PC-9 (cell line): ENCODE measurements at regions of chr9 and their contacts with region 1.

Region 1: GRCh38 chr9:94672811-94673487 is 33.6 kb upstream of the FBP1 start:
- DNase-seq: peak in 1 of 2 experiments; percentile 85
- H3K4me3 ChIP-seq: no peak overlapping the region; the same call in 1 of the 2 replicates
- H3K27ac ChIP-seq: peak overlapping the region; percentile 61
- H3K4me1 ChIP-seq: peaks cover 19% of the 10 kb centered on the region
- H3K27me3 ChIP-seq: no peaks in the 10 kb centered on the region
- CTCF ChIP-seq: no peak

Region 2: GRCh38 chr9:94649100-94649819 is 23.7 kb before region 1 on chr9:
- CTCF ChIA-PET with region 1: interaction called, 10 read pairs
- POLR2A ChIA-PET with region 1: interaction called, 20 read pairs
- intact Hi-C with region 1: no loop called
- DNase-seq: peak; percentile 68 to 100
- H3K4me3 ChIP-seq: peak overlapping the region; percentile 29; the same call in 1 of the 2 replicates
- H3K27ac ChIP-seq: peak overlapping the region; percentile 95
- H3K4me1 ChIP-seq: peaks cover 68% of the 10 kb centered on the region
- H3K27me3 ChIP-seq: no peaks in the 10 kb centered on the region
- CTCF ChIP-seq: no peak

Region 3: DNA sequence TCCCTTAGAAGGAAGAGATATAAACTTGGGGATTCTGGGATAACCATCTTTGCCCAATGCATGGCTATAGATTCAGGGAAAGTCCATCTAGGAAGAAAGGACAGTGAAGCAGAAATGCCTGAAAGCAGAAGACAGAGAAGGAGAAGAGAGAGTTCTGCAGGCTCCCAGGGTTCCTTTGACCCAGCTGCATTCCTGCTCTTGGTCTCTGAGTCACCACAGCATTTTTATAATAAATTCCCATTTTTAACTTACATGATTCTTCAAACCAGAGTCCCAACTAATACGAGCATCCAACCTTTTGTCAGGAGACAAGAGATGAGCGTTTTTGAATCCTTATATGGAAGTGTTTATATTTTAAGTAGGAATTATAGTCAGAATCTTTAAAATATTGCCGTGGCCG is 41.5 kb after region 1 on chr9:
- CTCF ChIA-PET with region 1: no interaction called
- POLR2A ChIA-PET with region 1: no interaction called
- intact Hi-C with region 1: no loop called
- DNase-seq: no peak
- H3K4me3 ChIP-seq: no peak overlapping the region
- H3K27ac ChIP-seq: no peak overlapping the region
- H3K4me1 ChIP-seq: peaks cover 21% of the 10 kb centered on the region
- H3K27me3 ChIP-seq: no peaks in the 10 kb centered on the region
- CTCF ChIP-seq: no peak

Region 4: GRCh38 chr9:94726495-94727191 is 53.7 kb after region 1 on chr9 and contains the start of gene AOPEP:
- CTCF ChIA-PET with region 1: no interaction called
- POLR2A ChIA-PET with region 1: no interaction called
- intact Hi-C with region 1: loop called (anchors 2 kb)
- DNase-seq: peak; percentile 85 to 99
- H3K4me3 ChIP-seq: peak within 1 kb of the TSS; percentile 72
- H3K27ac ChIP-seq: peak within 1 kb of the TSS; percentile 69
- H3K4me1 ChIP-seq: peaks cover 16% of the 10 kb centered on the region
- H3K27me3 ChIP-seq: no peaks in the 10 kb centered on the region
- CTCF ChIP-seq: no peak
- total RNA-seq, gene AOPEP: 90.0 and 135 TPM in 2 replicates

Region 5: GRCh38 chr9:94821098-94821887 is 148.3 kb after region 1 on chr9:
- CTCF ChIA-PET with region 1: no interaction called
- POLR2A ChIA-PET with region 1: no interaction called
- intact Hi-C with region 1: no loop called
- DNase-seq: no peak
- H3K4me3 ChIP-seq: no peak overlapping the region
- H3K27ac ChIP-seq: peak overlapping the region; percentile 96; the same call in 1 of the 2 replicates
- H3K4me1 ChIP-seq: peaks cover 64% of the 10 kb centered on the region
- H3K27me3 ChIP-seq: no peaks in the 10 kb centered on the region
- CTCF ChIP-seq: no peak

Region 6: DNA sequence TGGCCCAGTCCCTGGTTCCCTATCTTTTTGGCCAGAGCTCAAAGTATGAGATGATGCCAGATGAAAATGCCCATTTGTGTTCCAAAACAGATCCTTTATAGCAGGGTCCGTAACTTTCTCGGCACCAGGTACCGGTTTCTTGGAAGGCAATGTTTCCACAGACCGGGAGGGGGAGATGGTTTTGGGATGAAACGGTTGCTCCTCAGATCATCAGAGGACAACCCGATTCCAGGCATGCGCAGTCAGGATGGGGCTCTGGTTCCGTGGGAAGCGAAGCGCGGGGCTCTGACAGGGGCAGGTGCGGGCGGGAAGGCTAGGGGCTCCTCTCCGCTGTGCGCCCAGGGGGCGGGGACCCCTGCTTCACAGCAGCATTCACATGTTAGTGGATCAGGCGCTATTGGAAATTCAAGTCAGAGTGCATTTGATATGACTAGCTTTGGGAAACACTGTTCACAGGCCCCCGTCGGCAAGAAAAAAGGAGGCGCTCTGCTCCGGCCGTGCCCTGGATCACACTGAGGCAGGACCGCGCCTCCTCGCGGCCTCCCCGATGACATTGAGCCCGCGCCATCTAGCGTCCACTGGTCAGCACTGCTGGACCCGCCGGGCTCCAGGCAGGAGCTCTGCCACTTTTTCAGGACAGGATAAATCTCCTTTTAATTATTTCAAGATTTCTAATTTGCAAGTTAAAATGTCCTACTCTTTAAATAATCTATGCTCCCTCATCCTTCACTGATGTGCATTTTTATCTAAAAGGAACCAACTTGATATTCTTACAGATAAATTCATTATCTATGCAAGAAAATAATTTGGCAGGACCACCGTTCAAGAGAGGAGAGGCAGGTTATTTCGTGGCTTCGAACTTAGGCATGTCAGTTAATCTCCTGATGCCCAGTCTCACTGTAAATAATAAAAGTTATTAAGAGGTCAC is 454.6 kb after region 1 on chr9:
- CTCF ChIA-PET with region 1: interaction called, 30 read pairs
- POLR2A ChIA-PET with region 1: interaction called, 13 read pairs
- intact Hi-C with region 1: loop called (anchors 2 kb)
- DNase-seq: peak; percentile 43 to 83
- H3K4me3 ChIP-seq: no peak overlapping the region
- H3K27ac ChIP-seq: no peak overlapping the region
- H3K4me1 ChIP-seq: no peaks in the 10 kb centered on the region
- H3K27me3 ChIP-seq: no peaks in the 10 kb centered on the region
- CTCF ChIP-seq: peak; percentile 89

Region 7: DNA sequence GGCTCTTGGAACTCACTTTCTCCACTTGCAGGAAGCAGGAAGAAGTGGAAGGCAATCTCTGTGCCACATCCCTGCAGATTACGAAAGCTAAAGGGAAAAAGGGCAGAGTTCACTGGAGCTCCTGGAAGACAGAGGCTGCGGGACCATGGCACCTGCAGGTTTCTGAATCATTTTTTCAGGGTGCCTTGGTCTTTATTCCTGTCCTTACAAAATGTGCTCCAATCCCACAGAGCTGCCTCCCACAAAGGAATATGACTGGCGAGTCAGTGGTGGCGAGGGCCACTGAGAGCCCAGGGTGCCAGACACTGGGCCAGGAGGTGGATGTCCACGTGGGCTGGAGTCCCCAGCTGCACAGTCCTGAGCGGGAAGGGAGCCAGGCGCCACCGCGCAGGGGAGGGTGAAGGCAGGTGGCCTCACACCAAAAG is 461.5 kb after region 1 on chr9:
- CTCF ChIA-PET with region 1: interaction called, 30 read pairs
- POLR2A ChIA-PET with region 1: interaction called, 13 read pairs
- intact Hi-C with region 1: loop called (anchors 2 kb)
- DNase-seq: no peak
- H3K4me3 ChIP-seq: no peak overlapping the region
- H3K27ac ChIP-seq: no peak overlapping the region
- H3K4me1 ChIP-seq: no peaks in the 10 kb centered on the region
- H3K27me3 ChIP-seq: no peaks in the 10 kb centered on the region
- CTCF ChIP-seq: no peak